HEK293 (cell line): ENCODE measurements at regions of chr7 and their contacts with region 1.

Region 1: DNA sequence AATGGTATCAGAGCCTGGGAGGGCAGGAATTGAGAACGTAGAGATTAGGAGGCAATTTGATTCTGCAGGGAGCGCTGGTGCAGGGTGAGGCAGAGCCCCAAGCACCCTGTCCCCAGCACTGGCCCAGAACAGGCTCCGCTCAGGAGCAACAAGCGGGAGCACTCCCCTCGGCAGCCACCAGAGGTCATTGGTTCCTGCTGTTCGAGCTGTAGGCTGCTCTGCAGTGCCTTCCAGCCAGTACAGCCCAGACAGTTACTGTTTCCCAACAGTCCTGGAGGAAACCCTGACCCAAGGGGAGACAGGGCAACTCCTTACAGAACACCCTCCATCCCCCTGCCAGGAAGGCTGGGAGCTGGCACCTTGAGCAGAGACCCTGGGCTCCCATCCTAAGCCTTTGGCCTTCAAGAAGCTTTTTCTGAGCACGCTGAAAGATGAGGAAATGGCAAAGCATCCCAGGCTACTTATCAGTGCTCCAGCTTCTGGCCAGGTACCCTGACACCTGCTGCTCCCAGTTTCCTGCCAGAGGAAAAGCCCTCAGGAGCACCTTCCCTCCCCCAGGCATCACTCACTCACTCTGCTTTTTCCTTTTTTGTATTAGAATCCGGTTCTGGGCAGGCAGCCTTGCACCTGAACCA is 71.2 kb upstream of the EFCAB10 start:
- H3K4me3 ChIP-seq: no peak overlapping the region
- H3K27ac ChIP-seq: no peak overlapping the region
- H3K4me1 ChIP-seq: peaks cover 6% of the 10 kb centered on the region
- CTCF ChIP-seq: peak; percentile 80

Region 2: GRCh38 chr7:105637755-105638312 is 14.6 kb before region 1 on chr7:
- CTCF ChIA-PET with region 1: no interaction called
- POLR2A ChIA-PET with region 1: no interaction called
- H3K4me3 ChIP-seq: no peak overlapping the region
- H3K27ac ChIP-seq: no peak overlapping the region
- H3K4me1 ChIP-seq: no peaks in the 10 kb centered on the region
- CTCF ChIP-seq: no peak

Region 3: GRCh38 chr7:105664816-105665525 is 12.5 kb after region 1 on chr7:
- CTCF ChIA-PET with region 1: interaction called, 22 read pairs
- POLR2A ChIA-PET with region 1: no interaction called
- H3K4me3 ChIP-seq: no peak overlapping the region
- H3K27ac ChIP-seq: no peak overlapping the region
- H3K4me1 ChIP-seq: peaks cover 8% of the 10 kb centered on the region
- CTCF ChIP-seq: no peak

Region 4: DNA sequence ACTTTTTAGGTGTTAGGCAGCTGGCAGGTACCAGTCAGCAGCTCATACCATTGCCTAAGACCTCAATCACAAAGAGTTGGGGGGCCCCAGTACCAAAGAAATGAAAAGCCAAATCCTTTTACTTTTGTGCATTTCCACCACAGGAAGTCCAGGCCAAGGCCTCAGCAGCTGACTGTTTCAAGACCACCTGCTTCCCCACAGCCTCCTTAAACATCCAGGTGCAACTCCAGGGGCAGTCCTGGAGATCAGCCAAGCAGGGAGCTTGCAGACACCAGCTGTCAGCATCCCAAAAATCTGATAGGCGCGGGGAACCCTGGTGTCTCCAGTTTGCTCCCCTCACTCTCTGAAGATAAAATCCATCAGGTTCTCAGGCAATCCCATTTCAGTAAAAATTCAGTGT is 20.3 kb after region 1 on chr7:
- CTCF ChIA-PET with region 1: interaction called, 10 read pairs
- POLR2A ChIA-PET with region 1: no interaction called
- H3K4me3 ChIP-seq: no peak overlapping the region
- H3K27ac ChIP-seq: no peak overlapping the region
- H3K4me1 ChIP-seq: peaks cover 2% of the 10 kb centered on the region; the same call in 1 of the 2 replicates
- CTCF ChIP-seq: no peak

Region 5: DNA sequence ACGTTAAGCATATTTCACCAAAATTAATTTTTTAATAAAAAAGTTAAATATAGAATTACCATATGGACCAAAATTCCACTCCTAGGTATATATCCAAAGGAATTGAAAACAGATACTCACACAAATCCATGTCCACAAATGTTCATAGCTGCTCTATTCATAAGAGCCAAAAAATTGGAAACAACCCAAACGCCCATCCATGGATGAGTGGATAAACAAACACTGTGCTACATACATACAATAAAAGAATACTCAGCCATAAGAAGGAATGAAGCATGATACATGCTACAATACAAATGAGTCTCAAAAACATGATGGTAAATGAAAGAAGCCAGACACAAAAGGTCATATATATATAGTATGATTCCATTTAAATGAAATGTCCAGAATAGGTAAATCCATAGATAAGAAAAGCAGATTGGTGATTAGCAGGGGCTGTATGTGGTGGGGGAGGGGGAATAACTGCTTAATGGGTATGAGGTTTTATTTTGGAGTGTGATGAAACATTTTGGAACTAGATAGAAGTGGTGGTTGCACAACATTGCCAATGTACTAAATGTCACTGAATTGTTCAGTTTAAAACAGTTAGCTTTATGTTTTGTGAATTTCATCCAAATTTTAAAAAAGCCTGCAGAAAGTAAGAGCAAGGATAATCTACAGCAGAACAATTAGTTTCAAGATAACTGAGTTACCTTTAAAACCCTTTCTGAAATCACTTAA is 30.0 kb after region 1 on chr7:
- CTCF ChIA-PET with region 1: interaction called, 11 read pairs
- POLR2A ChIA-PET with region 1: no interaction called
- H3K4me3 ChIP-seq: no peak overlapping the region
- H3K27ac ChIP-seq: no peak overlapping the region
- H3K4me1 ChIP-seq: no peaks in the 10 kb centered on the region
- CTCF ChIP-seq: no peak

Region 6: DNA sequence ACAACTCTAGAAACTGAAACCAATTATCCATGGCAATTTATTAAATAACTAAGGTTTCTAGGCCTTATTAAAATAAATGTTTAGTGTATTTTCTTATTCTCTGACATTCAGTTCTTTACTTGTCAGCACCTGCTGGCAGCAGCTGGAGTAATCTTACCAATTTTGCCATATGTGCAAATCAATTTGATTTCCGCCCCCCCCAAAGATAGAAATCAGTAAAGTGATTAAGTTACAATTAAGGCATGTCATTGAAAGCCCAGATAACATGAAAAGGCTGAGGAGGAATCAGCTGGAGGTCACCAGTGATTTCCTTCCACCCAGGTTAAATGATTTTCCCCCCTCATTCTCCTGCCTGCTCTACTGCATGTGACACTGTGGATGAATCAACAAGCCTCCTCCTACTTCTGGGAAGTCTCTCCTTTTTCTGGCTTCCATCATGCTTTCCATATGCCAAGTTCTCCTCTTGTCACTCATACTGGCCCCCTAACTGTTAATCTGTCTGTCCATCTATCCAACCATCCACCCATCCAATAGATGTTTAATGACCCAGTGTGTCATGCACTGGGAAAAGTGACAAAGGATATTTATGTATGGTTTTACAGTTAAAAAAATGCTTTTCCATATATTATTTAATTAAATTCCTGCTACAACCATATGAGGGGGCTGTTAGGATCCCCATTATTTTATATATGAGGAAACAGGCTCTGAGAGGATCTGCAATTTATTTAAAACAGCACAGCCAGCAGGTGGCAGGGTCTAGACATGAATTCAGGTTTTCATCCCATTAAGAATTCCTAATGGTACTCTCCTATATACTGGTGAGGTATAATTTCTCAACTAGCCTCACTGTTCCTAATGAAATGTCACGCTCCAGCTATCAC is 107.4 kb after region 1 on chr7:
- CTCF ChIA-PET with region 1: interaction called, 15 read pairs
- POLR2A ChIA-PET with region 1: no interaction called
- H3K4me3 ChIP-seq: no peak overlapping the region
- H3K27ac ChIP-seq: no peak overlapping the region
- H3K4me1 ChIP-seq: no peaks in the 10 kb centered on the region
- CTCF ChIP-seq: peak; percentile 27; the same call in 1 of the 2 replicates

Region 7: DNA sequence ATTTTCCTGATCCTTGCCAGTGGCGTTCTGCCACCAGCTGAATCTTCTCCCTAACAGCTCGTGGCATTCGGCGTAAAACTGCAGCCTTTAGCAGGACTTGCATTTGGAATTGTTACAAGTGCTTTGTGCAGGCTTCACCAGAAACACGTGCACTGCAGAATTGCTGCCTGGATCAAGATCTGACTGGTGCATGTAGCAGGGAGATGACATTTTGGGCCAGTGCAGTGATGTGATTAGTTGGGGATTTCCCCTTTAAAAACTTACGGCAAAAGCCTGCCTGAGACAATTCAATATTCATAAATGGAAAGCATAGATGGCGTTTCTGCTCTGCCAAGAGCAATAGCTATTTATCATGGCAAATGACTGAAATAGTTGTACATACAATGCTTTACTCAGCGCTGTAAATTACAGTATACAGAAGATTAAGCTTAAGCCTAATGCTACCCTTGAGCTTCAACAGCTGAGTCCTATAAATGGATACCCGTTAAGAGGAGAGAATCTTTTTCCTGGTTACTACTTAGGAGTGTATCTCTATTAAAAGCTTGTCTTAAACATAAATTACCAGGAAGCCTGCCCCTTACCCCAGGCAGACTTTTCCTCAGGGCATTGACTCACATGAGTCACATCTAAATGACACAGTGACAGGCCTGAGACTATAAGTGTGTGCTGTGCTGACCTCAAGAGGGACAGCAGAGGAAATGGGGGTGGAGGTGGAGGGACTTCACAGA is 117.6 kb after region 1 on chr7:
- CTCF ChIA-PET with region 1: interaction called, 14 read pairs
- POLR2A ChIA-PET with region 1: no interaction called
- H3K4me3 ChIP-seq: no peak overlapping the region
- H3K27ac ChIP-seq: no peak overlapping the region
- H3K4me1 ChIP-seq: no peaks in the 10 kb centered on the region
- CTCF ChIP-seq: no peak

Region 8: GRCh38 chr7:106041140-106041717 is 388.8 kb after region 1 on chr7:
- CTCF ChIA-PET with region 1: interaction called, 18 read pairs
- POLR2A ChIA-PET with region 1: no interaction called
- H3K4me3 ChIP-seq: no peak overlapping the region
- H3K27ac ChIP-seq: no peak overlapping the region
- H3K4me1 ChIP-seq: 0 out of 2 replicates have a peak, but pooled peaks cover 2% of the 10 kb centered on the region
- CTCF ChIP-seq: peak; percentile 63

Region 9: DNA sequence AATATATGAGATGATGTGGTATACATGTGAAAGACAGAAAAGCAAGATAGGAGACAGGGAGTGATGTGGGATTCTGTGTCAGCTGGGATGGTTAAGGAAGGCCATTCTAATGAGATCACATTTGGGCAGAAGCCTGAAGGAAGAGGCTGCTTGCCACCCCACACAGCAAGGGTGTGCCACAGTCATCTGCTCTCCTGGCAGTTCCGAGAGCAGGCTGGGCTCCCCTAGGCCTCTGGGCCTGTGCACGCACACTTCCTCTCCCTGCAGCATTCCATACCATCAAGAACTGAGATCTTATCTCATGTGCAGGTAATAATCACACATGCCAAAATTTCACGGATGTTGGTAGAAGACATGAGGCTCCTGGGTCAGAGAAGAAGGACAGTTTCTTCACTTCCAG is 416.5 kb after region 1 on chr7:
- CTCF ChIA-PET with region 1: no interaction called
- POLR2A ChIA-PET with region 1: no interaction called
- H3K4me3 ChIP-seq: no peak overlapping the region
- H3K27ac ChIP-seq: no peak overlapping the region
- H3K4me1 ChIP-seq: peaks cover 27% of the 10 kb centered on the region
- CTCF ChIP-seq: no peak